Motor neuron (in vitro differentiated cells): ENCODE measurements at regions of chrX and their contacts with region 1.

Region 1: GRCh38 chrX:113929004-113929403 is 654.9 kb upstream of the HTR2C start:
- ATAC-seq: peak in 6 of 8 experiments; percentile 64 to 93 (median 70)
- H3K4me3 ChIP-seq: no peak overlapping the region
- H3K27ac ChIP-seq: no peak overlapping the region
- H3K4me1 ChIP-seq: no peaks in the 10 kb centered on the region

Region 2: GRCh38 chrX:113558571-113558970 is 370.4 kb before region 1 on chrX:
- in situ Hi-C with region 1: no loop called
- ATAC-seq: no peak
- H3K4me3 ChIP-seq: no peak overlapping the region
- H3K27ac ChIP-seq: no peak overlapping the region
- H3K4me1 ChIP-seq: no peaks in the 10 kb centered on the region

Region 3: DNA sequence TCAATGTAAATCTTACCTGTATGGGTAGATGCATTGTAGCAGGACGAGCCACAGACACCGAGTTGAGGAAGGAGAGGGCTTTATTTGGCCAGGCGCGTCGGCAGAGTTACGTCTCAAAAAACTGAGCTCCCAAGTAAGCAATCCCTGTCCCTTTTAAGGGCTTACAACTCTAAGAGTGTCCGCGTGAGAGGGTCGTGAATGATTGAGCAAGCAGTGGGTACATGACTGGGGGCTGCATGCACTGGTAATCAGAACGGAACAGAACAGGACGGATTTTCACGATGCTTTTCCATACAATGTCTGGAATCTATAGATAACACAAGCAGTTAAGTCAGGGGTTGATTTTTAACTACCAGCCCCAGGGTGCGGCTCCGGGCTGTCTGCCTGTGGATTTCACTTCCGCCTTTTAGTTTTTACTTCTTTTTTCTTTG is 130.0 kb after region 1 on chrX:
- in situ Hi-C with region 1: loop called in 1 of 9 experiments (anchors 25 kb)
- ATAC-seq: no peak
- H3K4me3 ChIP-seq: no peak overlapping the region
- H3K27ac ChIP-seq: no peak overlapping the region
- H3K4me1 ChIP-seq: no peaks in the 10 kb centered on the region